Sciatic nerve (tissue), 2 donors: ENCODE measurements at regions of chr6 and their contacts with region 1.

Region 1: GRCh38 chr6:113873043-113873667 is 16.0 kb downstream of the MARCKS start:
- DNase-seq: peak; percentile 60
- ATAC-seq: peak; percentile 69

Region 2: GRCh38 chr6:113856625-113857555 is 16.3 kb before region 1 on chr6 and contains the start of gene MARCKS:
- intact Hi-C with region 1: no loop called
- DNase-seq: peak; percentile 90
- ATAC-seq: peak; percentile 82
- total RNA-seq, gene MARCKS: 199 TPM

Region 3: GRCh38 chr6:113920663-113921267 is 47.6 kb after region 1 on chr6:
- intact Hi-C with region 1: loop called (anchors 2 kb)
- DNase-seq: no peak
- ATAC-seq: peak; percentile 26